Psoas muscle (tissue), 8 donors: ENCODE measurements at regions of chr2 and their contacts with region 1.

Region 1: DNA sequence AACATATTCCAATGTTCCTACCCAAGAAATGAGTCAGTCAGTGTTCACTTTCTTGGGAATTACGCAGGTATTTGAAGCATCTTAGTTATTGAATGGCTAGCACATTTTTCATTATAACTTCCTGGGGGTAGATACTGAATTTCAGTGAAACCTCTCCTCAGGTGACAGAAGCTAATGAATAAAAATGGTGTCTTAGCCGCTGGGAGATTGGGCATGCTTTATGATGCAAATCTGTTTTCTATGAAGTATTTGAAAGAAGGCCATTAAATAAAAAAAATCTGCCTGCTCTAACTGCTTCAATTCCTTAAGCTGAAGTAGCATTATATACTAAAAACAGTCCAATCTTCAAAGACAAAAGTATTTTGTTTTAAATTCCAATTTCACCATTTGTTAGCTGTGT is 132.8 kb upstream of the CYRIA start:
- DNase-seq: no peak
- ATAC-seq: no peak
- H3K4me3 ChIP-seq: no peak overlapping the region
- H3K27ac ChIP-seq: no peak overlapping the region
- H3K4me1 ChIP-seq: no peaks in the 10 kb centered on the region
- H3K27me3 ChIP-seq: no peaks in the 10 kb centered on the region
- CTCF ChIP-seq: no peak

Region 2: GRCh38 chr2:16090650-16091575 is 707.6 kb before region 1 on chr2:
- intact Hi-C with region 1: no loop called
- DNase-seq: no peak
- ATAC-seq: no peak
- H3K4me3 ChIP-seq: no peak overlapping the region
- H3K27ac ChIP-seq: no peak overlapping the region
- H3K4me1 ChIP-seq: no peaks in the 10 kb centered on the region
- H3K27me3 ChIP-seq: no peaks in the 10 kb centered on the region
- CTCF ChIP-seq: no peak

Region 3: DNA sequence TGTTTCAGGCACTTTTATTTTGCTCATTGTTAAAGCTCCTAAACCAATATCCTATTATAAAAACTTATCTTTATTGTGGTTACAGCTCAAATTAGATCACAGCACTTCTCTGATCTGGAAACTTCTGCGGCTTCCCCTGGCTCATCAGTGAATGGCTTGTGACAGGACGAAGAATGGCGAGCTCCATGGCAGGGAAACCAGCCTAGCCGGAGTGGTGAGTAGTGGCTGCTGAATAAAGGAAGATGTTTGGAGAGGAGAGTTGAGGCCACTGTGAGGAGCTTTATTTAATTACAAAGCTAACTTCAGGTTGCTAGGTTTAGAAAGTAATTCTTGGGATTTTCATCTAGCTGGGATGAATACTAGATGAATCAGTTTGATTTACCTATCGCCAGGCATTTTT is 346.4 kb before region 1 on chr2:
- intact Hi-C with region 1: no loop called
- DNase-seq: no peak
- ATAC-seq: no peak
- H3K4me3 ChIP-seq: no peak overlapping the region
- H3K27ac ChIP-seq: no peak overlapping the region
- H3K4me1 ChIP-seq: no peaks in the 10 kb centered on the region
- H3K27me3 ChIP-seq: no peaks in the 10 kb centered on the region
- CTCF ChIP-seq: no peak

Region 4: DNA sequence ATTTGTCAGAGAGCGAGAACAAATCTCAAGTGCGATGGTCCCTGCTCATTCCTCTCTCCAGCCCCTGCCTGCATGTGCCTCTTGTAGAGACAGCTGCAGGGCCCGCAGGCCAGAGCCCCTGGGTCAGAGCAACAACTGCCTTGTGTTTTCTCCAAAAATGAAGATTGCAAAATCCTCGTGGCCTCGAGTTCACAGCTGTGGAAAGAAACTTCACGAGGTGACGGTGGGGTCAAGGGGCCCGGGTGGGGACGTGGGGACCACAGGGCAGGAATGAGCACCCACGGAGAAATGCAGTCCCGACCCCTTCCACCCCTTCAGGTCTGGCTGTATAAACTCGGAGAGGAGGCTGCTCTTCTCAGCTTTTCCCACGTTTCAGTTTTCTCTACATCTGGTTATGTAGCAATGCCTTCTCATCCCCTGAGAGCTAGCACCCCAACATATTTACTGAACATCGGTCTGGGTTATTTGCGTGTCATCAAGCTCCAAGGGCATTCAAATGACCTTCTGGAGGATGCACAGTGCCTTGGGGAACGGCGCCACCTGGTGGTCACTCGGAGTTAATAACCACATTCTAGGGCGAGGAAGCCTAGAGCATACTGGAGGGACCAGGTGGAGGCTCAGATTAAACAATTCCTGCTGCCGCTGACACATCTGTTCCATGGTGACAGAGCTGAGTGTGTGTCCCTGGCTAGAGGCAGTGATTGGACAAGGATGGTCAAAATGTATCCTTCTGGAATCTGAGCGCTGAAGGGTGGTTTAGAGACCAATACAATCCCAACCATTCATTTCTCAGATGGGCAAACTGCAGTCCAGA is 41.4 kb before region 1 on chr2:
- intact Hi-C with region 1: no loop called
- DNase-seq: peak; percentile 77 to 90
- ATAC-seq: peak; percentile 92 to 97 (median 93)
- H3K4me3 ChIP-seq: no peak overlapping the region
- H3K27ac ChIP-seq: peak overlapping the region; percentile 0
- H3K4me1 ChIP-seq: no peaks in the 10 kb centered on the region
- H3K27me3 ChIP-seq: no peaks in the 10 kb centered on the region
- CTCF ChIP-seq: peak; percentile 95

Region 5: DNA sequence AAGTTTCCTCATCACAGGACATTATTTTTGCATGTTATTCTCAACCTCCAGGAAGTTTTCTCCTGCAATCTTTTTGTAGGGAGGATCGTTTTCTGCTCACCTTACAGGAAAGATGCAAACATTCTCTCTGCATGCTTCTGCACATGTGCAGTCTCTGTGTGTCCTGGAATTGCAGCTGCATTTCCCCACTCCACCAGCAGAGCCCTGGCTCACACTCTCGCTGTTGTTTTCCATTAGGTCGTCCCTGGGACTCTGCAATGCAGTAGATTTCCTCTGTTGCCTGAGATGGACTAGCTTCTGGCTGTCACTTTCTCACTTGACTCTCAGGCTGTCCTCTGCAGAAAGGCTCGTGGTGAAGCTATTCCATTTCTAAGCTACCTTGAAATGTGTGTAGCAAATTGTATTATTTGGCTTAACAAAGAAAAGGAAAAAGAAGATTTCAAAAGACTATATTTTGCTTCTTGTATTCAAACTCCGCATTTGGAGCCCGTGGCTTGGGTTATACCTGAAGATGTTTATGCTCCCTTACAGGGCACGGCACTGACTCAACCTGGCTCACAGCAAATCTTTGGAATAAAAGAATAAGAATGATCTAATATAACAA is 373.1 kb after region 1 on chr2:
- intact Hi-C with region 1: loop called in 1 of 2 experiments (anchors 5 kb)
- DNase-seq: no peak
- ATAC-seq: no peak
- H3K4me3 ChIP-seq: no peak overlapping the region
- H3K27ac ChIP-seq: no peak overlapping the region
- H3K4me1 ChIP-seq: no peaks in the 10 kb centered on the region
- H3K27me3 ChIP-seq: peaks cover 0 to 2% (median 0%) of the 10 kb centered on the region in 3 donors
- CTCF ChIP-seq: peak; percentile 24